HAP-1 (cell line): ENCODE measurements at regions of chr3 and their contacts with region 1.

Region 1: GRCh38 chr3:71859123-71859519 is 74.2 kb upstream of the PROK2 start:
- DNase-seq: peak; percentile 10 to 49
- H3K4me3 ChIP-seq: no peak overlapping the region
- H3K4me1 ChIP-seq: no peaks in the 10 kb centered on the region
- H3K27me3 ChIP-seq: peaks cover 2% of the 10 kb centered on the region; the same call in 1 of the 2 replicates

Region 2: GRCh38 chr3:71690341-71690841 is 168.7 kb before region 1 on chr3:
- in situ Hi-C with region 1: no loop called
- DNase-seq: peak; percentile 72 to 84
- H3K4me3 ChIP-seq: no peak overlapping the region
- H3K4me1 ChIP-seq: peaks cover 71% of the 10 kb centered on the region
- H3K27me3 ChIP-seq: no peaks in the 10 kb centered on the region

Region 3: GRCh38 chr3:71734883-71735282 is 124.2 kb before region 1 on chr3:
- in situ Hi-C with region 1: loop called (anchors 10 kb)
- DNase-seq: no peak
- H3K4me3 ChIP-seq: no peak overlapping the region
- H3K4me1 ChIP-seq: peaks cover 5% of the 10 kb centered on the region
- H3K27me3 ChIP-seq: peaks cover 9% of the 10 kb centered on the region

Region 4: DNA sequence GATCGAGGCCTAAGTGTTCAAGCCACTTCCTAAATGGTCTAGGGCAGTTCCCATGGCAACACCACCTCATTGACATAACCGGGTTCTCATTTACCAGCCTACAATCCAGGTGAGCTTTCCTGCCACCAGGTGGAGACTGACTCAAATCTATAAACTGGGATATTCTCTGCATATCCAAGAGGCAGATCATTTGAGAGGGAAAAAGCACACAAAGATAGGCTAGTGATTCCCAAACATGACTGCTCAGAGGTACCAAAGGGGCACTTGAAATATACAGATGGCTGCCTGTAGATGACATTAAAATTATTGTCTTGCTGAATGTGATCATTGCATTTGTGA is 67.1 kb after region 1 on chr3:
- in situ Hi-C with region 1: no loop called
- DNase-seq: peak; percentile 26 to 62
- H3K4me3 ChIP-seq: no peak overlapping the region
- H3K4me1 ChIP-seq: peaks cover 11% of the 10 kb centered on the region
- H3K27me3 ChIP-seq: no peaks in the 10 kb centered on the region

Region 5: DNA sequence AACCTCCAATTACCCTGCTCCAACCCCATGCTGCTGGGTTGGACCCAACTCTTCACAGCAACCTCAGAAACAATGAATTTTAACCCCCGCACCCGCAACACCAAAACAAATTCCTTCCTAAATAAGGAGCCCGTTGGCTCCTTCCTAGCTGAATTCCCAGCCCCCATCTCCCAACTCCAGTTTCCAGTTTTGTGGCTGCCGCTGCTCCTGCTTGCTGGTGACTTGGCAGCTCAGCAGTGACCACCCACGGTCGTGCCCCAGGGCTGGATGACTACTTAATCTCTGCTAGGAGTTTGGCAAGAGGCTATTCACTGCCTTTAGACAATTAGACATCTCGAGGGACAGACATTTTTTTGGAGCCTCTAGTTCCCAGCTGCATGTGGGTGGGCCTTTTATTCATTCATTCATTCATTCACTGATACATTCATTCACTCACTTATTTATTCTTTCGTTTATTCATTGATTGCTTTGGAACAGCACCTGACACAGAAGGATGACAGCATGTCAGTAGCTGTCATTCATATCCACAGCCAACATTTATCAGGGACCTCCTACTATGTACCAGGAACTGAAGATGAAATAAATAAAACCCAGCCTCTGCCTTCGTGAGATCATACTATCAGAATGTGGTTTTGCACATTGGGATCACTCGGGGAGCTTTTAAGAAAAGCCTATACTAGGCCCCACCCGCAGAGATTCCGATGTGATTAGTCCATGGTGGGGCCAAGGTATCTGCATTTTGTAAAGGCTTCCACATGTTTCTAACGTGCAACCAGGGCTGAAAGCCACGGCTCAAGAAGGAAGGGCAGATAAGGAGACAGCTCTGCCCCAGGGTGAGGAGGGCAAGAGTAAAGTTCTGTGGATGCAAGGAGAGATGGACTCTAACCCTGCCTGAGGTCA is 732.7 kb after region 1 on chr3:
- in situ Hi-C with region 1: no loop called
- DNase-seq: peak; percentile 12 to 60
- H3K4me3 ChIP-seq: no peak overlapping the region
- H3K4me1 ChIP-seq: no peaks in the 10 kb centered on the region
- H3K27me3 ChIP-seq: no peaks in the 10 kb centered on the region